Heart right ventricle (tissue), 16 donors: ENCODE measurements at regions of chr11 and their contacts with region 1.

Region 1: DNA sequence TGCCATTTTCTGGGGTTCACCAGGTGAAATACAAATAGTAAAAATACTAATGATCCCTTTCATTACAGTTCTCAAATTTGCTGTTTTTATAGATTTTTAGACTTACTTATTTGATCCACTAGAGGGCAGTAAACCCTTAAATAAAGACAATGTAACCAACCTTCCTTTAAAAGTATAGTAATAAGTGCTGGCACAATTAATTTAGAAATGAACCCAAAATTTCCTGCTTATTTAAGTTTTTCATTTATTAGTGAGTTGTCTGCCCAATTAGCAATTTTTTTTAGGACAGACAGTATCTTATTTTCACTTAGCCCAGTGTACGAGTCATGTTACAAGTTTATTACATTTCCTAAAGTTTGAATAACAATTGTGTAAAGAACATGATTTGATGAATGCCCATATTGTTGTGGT is 4.7 kb downstream of the DDIAS start:
- DNase-seq: no peak
- ATAC-seq: no peak
- H3K4me3 ChIP-seq: no peak overlapping the region
- H3K27ac ChIP-seq: no peak overlapping the region
- H3K4me1 ChIP-seq: peaks cover 0 to 19% (median 5%) of the 10 kb centered on the region in 9 donors
- H3K27me3 ChIP-seq: no peaks in the 10 kb centered on the region
- CTCF ChIP-seq: peak; percentile 53 to 81 (median 67)

Region 2: GRCh38 chr11:83193315-83194280 is 287.3 kb after region 1 on chr11 and contains the start of gene ANKRD42:
- intact Hi-C with region 1: loop called in 6 of 10 experiments (anchors 2 to 10 kb)
- DNase-seq: peak; percentile 88 to 96
- ATAC-seq: peak; percentile 97 to 99 (median 98)
- H3K4me3 ChIP-seq: peak within 1 kb of the TSS; percentile 63 to 90 (median 80)
- H3K27ac ChIP-seq: peak within 1 kb of the TSS; percentile 37 to 96 (median 90)
- H3K4me1 ChIP-seq: peaks cover 7 to 39% (median 30%) of the 10 kb centered on the region in 9 donors
- H3K27me3 ChIP-seq: no peaks in the 10 kb centered on the region
- CTCF ChIP-seq: no peak
- total RNA-seq, gene ANKRD42: 3.7 to 10.7 (median 6.4) TPM

Region 3: DNA sequence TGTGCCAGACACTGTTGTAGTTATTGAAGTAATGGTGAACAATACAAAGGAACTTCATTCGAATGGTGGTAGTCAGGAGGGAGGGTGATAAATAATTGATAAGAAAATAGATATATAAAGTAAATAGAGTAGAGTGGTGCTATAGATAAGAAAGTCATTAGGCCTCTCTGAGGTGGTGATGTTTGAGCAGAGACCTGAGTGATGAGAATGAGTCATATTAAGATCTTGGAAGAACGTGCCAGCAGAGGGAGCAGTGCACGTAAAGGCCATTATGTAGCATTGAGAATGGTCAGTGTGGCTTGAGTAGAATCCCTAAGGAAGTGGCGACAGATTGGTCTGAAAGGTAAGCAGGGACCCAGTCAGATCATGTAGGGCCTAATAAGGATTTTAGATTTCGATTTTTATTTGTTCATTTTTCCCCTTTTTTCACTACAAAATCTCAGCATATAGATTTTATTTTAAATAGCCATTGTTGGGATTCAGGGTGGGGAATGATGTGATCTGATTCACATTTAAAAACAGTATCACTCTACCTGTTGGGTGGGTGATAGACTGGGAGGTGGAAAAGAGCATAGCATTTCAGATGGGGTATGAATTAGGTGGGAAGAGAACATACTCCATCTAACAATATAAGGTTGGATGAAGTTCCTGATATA is 335.2 kb after region 1 on chr11:
- intact Hi-C with region 1: loop called in 3 of 10 experiments (anchors 5 to 10 kb)
- DNase-seq: peak in 1 of 2 donors; percentile 19
- ATAC-seq: peak in 4 of 8 donors; percentile 62 to 85 (median 74)
- H3K4me3 ChIP-seq: no peak overlapping the region
- H3K27ac ChIP-seq: no peak overlapping the region
- H3K4me1 ChIP-seq: peaks cover 0 to 3% (median 0%) of the 10 kb centered on the region in 9 donors
- H3K27me3 ChIP-seq: no peaks in the 10 kb centered on the region
- CTCF ChIP-seq: peak in 8 of 9 donors; percentile 16 to 65 (median 58)

Region 4: GRCh38 chr11:83249972-83250593 is 343.8 kb after region 1 on chr11:
- intact Hi-C with region 1: loop called (anchors 1 to 10 kb)
- DNase-seq: no peak
- ATAC-seq: peak in 3 of 8 donors; percentile 42 to 65 (median 55)
- H3K4me3 ChIP-seq: no peak overlapping the region
- H3K27ac ChIP-seq: no peak overlapping the region
- H3K4me1 ChIP-seq: no peaks in the 10 kb centered on the region
- H3K27me3 ChIP-seq: no peaks in the 10 kb centered on the region
- CTCF ChIP-seq: peak; percentile 43 to 84 (median 69)